T-cell (primary cell): ENCODE measurements at regions of chr1 and their contacts with region 1.

Region 1: GRCh38 chr1:242870966-242871365 is 346.5 kb upstream of the PLD5 start:
- DNase-seq: no peak
- ATAC-seq: no peak
- H3K4me3 ChIP-seq: no peak overlapping the region
- H3K4me3 Mint-ChIP-seq: no peak overlapping the region
- H3K27ac ChIP-seq: no peak overlapping the region
- H3K27ac Mint-ChIP-seq: no peak overlapping the region
- H3K4me1 ChIP-seq: no peaks in the 10 kb centered on the region
- H3K4me1 Mint-ChIP-seq: no peaks in the 10 kb centered on the region
- H3K27me3 ChIP-seq: peaks cover 0 to 4% of the 10 kb centered on the region in 2 experiments
- H3K27me3 Mint-ChIP-seq: peaks cover 0 to 7% of the 10 kb centered on the region in 2 donors

Region 2: DNA sequence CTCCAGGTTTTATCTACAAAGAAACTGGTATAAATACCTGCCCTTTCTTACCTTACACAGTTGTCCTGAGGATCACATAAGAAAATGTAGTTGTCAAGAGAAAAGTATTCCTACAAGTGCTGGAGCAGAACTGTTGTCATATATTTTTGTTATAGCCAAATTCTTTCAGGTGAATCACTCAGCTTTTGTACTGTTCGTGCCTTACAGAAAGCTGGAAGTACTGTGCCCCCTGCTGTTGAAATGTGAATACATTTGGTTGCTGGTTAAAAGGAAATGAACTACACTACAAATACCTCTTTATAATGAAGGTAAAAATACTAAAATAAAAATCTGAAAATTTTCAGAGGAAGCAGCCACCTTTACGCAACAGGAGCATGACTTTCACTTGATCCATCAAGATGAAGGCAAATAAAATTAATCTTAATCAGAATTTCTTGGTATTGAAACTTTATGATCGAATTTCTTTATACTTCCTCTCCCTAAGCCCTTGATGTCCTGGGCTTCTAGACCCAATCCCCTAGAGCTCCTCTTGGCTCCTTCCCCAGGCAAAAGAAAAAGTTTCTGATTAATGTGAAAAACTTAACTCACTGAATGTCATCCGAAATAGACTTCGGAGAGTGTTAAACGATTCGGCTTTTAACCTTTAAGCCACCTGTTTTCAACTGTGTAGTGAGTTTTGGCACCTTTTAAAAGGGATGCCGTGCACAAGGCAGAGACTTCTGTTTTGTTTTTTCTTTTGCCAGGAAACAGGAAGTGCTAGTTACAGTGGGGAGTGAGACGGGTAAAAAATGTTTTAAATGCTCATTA is 1243.3 kb before region 1 on chr1:
- CTCF ChIA-PET with region 1: no interaction called
- POLR2A ChIA-PET with region 1: no interaction called
- DNase-seq: peak in 27 of 35 experiments; percentile 7 to 80 (median 39)
- ATAC-seq: peak; percentile 81 to 90 (median 86)
- H3K4me3 ChIP-seq: peak overlapping the region; percentile 21 to 35
- H3K4me3 Mint-ChIP-seq: peak overlapping the region; percentile 60 to 72 (median 64)
- H3K27ac ChIP-seq: peak overlapping the region; percentile 65
- H3K27ac Mint-ChIP-seq: peak overlapping the region; percentile 95
- H3K4me1 ChIP-seq: peaks cover 7 to 12% of the 10 kb centered on the region in 2 experiments
- H3K4me1 Mint-ChIP-seq: peaks cover 22 to 32% (median 23%) of the 10 kb centered on the region in 3 donors
- H3K27me3 ChIP-seq: no peaks in the 10 kb centered on the region
- H3K27me3 Mint-ChIP-seq: no peaks in the 10 kb centered on the region

Region 3: GRCh38 chr1:242788771-242789170 is 82.2 kb before region 1 on chr1:
- CTCF ChIA-PET with region 1: no interaction called
- POLR2A ChIA-PET with region 1: no interaction called
- DNase-seq: no peak
- ATAC-seq: no peak
- H3K4me3 ChIP-seq: no peak overlapping the region
- H3K4me3 Mint-ChIP-seq: no peak overlapping the region
- H3K27ac ChIP-seq: no peak overlapping the region
- H3K27ac Mint-ChIP-seq: no peak overlapping the region
- H3K4me1 ChIP-seq: no peaks in the 10 kb centered on the region
- H3K4me1 Mint-ChIP-seq: peaks cover 0 to 3% (median 0%) of the 10 kb centered on the region in 3 donors
- H3K27me3 ChIP-seq: no peaks in the 10 kb centered on the region
- H3K27me3 Mint-ChIP-seq: peaks cover 0 to 12% of the 10 kb centered on the region in 2 donors

Region 4: DNA sequence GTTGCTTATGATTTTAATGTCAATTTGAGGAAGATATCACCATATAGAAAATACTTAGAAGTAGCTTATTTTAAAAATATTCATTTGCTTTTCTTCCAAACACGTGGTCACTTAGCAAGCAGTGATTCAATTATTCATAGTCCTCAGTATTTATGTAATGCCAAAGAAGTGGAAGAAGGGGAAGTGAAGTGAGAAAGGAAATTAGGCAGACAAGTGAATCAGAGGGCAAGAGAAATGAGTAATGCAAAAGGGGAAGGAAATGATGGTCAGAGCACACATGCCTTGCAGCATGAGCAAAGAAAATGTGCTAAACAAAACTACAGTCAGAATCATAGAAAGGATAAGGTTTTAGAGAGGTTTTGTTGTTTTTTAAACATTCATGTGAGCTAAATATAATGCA is 416.7 kb after region 1 on chr1:
- CTCF ChIA-PET with region 1: no interaction called
- POLR2A ChIA-PET with region 1: interaction called in 1 of 2 experiments, 12 read pairs
- DNase-seq: no peak
- ATAC-seq: peak in 2 of 4 experiments; percentile 28 to 63
- H3K4me3 ChIP-seq: no peak overlapping the region
- H3K4me3 Mint-ChIP-seq: no peak overlapping the region
- H3K27ac ChIP-seq: no peak overlapping the region
- H3K27ac Mint-ChIP-seq: peak overlapping the region; percentile 46 to 58
- H3K4me1 ChIP-seq: peaks cover 0 to 28% of the 10 kb centered on the region in 2 experiments
- H3K4me1 Mint-ChIP-seq: peaks cover 27 to 33% (median 30%) of the 10 kb centered on the region in 3 donors
- H3K27me3 ChIP-seq: no peaks in the 10 kb centered on the region
- H3K27me3 Mint-ChIP-seq: no peaks in the 10 kb centered on the region